ENCODE measurements at regions of chr1 and their contacts with region 1.

Region 1: DNA sequence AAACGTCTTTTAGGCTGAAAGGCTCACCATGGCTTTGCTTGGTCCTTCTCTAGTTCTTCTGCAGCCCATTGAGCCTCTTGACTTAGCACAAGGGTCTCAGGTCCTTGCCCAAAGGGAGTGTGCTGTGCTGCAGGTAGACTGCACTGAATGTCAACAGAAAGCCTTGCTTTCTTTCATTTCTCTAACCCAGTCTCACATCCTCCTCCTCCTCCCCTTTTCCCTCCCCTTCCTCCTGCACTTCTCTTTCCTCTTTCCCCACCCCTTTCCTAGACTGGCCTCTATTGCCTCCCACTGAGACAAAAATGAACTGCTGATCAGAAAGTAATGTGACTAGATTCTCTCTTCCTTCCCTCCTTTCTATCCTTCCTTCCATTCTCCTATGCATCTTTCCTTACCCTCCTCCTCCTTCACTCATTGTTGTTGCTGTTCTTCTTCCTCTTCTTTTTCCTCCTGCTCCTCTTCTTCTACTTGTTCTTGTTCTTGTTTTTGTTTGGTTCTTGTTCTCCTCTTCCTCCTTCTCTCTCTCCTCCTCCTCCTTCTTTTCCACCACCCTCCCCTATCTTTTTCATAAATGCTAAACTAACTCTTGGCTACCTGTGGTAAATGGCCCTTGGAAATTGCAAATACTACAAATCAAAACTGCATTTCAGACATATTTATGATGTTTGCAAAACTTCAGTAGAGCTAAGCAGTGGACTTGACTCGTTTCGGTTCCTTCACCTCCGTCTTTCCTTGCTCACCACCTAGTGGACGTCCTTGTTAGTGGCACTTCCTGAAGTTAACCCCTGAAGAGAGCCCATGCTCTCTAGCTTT is at the start of gene SELL:
- DNase-seq: peak; percentile 69
- H3K4me3 Mint-ChIP-seq: peak within 1 kb of the TSS; percentile 93
- H3K27ac Mint-ChIP-seq: peak within 1 kb of the TSS; percentile 86
- H3K4me1 Mint-ChIP-seq: peaks cover 40% of the 10 kb centered on the region
- H3K27me3 Mint-ChIP-seq: peaks cover 18% of the 10 kb centered on the region
- total RNA-seq, gene SELL: 115 and 117 TPM in 2 replicates

Region 2: GRCh38 chr1:168603501-168604110 is 1108.1 kb before region 1 on chr1:
- intact Hi-C with region 1: loop called (anchors 2 kb)
- DNase-seq: peak; percentile 41
- H3K4me3 Mint-ChIP-seq: no peak overlapping the region
- H3K27ac Mint-ChIP-seq: no peak overlapping the region
- H3K4me1 Mint-ChIP-seq: no peaks in the 10 kb centered on the region
- H3K27me3 Mint-ChIP-seq: peaks cover 13% of the 10 kb centered on the region

Region 3: DNA sequence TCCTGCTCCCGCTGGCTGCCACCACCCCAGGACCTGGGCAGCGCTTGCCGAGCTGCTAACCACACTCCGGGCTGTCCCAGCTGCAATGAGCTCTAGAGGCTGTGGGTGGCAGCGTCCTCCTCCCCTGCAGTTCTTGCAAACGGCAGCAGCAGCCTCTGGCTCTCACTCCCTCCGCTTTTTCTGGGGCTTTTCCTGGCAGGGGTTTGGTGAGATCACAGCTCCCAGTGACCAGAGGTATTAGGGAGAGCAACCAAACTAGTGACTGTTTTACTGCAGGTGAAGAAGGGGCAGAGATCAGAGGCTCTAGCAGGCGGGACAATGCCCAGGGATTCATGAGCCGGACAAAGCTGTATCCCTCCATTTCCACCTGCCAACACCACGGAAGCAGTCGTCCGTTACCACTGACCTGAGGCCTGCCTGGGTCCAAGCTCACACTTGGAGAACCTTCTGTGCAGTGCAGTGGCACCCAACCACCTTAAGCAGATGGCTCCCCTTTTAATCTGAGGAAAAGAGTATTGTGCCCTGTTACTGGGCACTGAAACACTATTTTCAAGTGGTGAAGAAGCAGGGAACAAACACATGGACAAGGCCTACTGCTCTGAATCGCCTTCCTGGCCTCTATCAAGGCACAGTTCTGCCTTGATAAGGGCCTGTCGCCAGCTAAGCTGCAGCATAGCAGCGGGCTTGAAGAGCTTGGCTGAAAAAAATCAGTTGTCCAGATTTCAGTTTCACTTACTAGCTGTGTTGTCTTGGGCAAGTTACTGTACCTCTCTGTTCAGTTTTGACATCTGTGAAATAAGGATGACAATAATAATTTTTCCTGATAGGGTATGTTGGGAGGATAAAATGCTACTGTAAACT is 125.0 kb before region 1 on chr1 and contains the start of gene F5:
- intact Hi-C with region 1: loop called (anchors 1 kb)
- DNase-seq: peak; percentile 71
- H3K4me3 Mint-ChIP-seq: peak within 1 kb of the TSS; percentile 96
- H3K27ac Mint-ChIP-seq: peak within 1 kb of the TSS; percentile 91
- H3K4me1 Mint-ChIP-seq: peaks cover 81% of the 10 kb centered on the region
- H3K27me3 Mint-ChIP-seq: no peaks in the 10 kb centered on the region
- total RNA-seq, gene F5: 58.0 and 58.2 TPM in 2 replicates

Region 4: DNA sequence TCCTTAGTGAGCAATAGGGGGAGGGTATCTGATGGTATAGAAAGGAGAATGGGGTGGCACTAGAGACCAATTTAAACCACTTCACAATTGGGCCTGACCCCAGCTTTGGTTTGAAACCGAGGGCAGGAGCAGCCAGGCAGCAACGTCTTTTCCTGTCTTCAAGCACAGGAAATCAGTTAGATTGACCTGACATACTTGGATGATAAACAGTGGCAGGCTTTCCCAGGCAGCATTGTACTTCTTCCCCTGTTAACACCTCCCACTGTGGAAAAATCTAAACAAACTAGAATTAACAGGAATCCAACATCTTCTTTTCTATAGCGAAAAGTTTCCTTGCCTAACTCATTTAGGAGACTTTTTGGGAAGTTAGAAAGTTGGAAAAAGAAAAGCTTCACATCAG is 40.8 kb before region 1 on chr1:
- intact Hi-C with region 1: loop called (anchors 1 kb)
- DNase-seq: no peak
- H3K4me3 Mint-ChIP-seq: no peak overlapping the region
- H3K27ac Mint-ChIP-seq: peak overlapping the region; percentile 41
- H3K4me1 Mint-ChIP-seq: peaks cover 49% of the 10 kb centered on the region
- H3K27me3 Mint-ChIP-seq: no peaks in the 10 kb centered on the region

Region 5: GRCh38 chr1:169694304-169695075 is 17.2 kb before region 1 on chr1:
- intact Hi-C with region 1: loop called (anchors 1 kb)
- DNase-seq: peak; percentile 56
- H3K4me3 Mint-ChIP-seq: peak overlapping the region; percentile 28
- H3K27ac Mint-ChIP-seq: peak overlapping the region; percentile 90
- H3K4me1 Mint-ChIP-seq: peaks cover 96% of the 10 kb centered on the region
- H3K27me3 Mint-ChIP-seq: no peaks in the 10 kb centered on the region

Region 6: GRCh38 chr1:169893494-169894362 is 182.1 kb after region 1 on chr1 and contains the start of gene SCYL3:
- intact Hi-C with region 1: loop called (anchors 2 kb)
- DNase-seq: peak; percentile 86
- H3K4me3 Mint-ChIP-seq: peak within 1 kb of the TSS; percentile 86
- H3K27ac Mint-ChIP-seq: peak within 1 kb of the TSS; percentile 100
- H3K4me1 Mint-ChIP-seq: peaks cover 51% of the 10 kb centered on the region
- H3K27me3 Mint-ChIP-seq: peaks cover 12% of the 10 kb centered on the region
- total RNA-seq, gene SCYL3: 11.8 and 12.3 TPM in 2 replicates